ENCODE measurements at regions of chr10 and their contacts with region 1.

Region 1: DNA sequence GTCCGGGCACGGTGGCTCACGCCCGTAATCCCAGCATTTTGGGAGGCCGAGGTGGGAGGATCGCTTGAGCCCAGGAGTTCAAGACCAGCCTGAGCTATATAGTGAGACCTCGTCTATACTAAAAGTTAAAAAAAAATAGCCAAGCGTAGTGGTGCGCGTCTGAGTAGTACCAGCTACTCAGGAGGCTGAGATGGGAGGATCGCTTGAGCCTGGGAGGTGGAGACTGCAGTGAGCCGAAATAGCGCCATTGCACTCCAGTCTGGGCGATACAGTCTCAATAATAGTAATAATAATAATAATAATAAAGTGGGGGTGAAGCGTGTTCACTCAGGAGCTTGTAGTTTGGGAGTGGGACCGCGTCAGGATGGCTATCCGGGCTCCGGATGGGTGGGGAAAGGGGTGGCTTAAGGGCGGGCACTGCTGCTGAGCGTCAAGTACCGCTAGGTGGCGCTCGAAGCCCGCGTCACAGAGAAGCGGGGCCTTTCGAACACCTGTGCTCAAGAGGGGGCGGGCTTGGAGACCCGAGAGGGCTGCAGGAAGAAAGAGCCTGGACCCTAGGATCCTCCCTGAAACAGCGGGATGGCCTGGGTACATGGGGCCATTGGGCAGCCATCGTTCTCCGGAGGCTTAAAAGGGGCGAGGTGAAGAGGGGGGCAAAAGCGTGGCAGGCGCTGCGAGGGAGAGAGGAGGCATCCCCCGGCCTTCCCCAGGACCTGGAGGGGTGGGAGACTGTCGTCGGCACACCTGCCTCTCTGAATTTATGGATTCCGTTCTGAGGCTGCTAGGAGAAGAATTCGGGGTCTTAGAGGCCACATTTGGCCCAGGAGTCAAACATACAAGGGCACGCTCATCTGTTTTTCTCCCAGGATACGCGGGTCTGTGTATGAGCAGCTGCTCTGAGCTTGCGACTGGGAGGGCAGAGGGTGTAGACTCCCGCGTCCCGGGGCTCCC is 14.5 kb downstream of the LBX1 start:
- DNase-seq: no peak
- H3K4me3 ChIP-seq: no peak overlapping the region
- CTCF ChIP-seq: peak; percentile 82

Region 2: DNA sequence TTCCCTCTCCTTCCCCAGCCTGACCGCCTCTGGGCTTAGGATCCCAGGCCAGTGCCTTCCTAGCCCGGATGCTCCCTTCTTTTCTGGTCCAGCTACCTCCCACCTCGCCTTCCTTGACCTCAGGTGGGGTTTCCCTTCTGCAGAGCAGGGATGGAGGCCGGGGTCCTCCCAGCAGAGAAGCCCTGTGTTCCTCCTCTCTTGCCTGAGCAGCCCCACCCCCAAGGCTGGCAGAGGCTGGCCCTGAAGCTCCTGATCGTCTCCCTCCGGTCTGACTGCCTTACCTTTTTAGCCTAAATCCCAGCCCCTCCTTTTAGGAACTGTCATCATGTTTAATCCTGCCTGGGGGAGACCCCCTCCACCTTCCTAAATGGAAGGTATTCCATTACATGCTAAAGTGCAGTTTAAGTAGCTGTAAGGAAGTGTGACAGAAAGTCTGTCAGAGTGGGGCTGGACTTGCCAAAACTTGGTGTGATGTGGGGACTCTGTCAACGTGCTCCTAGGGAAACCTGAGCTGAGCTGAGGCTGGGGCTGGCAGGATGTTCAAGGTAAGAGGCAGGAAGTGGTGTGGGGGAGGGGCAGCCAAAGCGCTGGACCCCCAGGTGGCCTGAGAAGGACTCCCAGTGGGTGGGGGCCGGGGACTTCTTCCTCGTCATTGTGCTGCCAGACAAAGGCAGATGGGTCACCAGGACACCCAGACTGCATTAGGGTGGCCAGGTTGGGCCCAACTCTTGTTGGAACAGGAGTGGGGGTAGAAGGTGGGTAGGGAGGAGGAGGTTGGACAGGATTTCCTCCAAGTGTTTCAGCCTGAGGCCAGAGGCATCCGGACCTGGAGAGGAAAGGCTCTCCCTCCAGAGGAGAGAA is 24.9 kb before region 1 on chr10:
- CTCF ChIA-PET with region 1: interaction called, 19 read pairs
- POLR2A ChIA-PET with region 1: no interaction called
- DNase-seq: no peak
- H3K4me3 ChIP-seq: no peak overlapping the region
- CTCF ChIP-seq: no peak

Region 3: GRCh38 chr10:101441541-101442455 is 227.1 kb after region 1 on chr10:
- CTCF ChIA-PET with region 1: interaction called, 42 read pairs
- POLR2A ChIA-PET with region 1: no interaction called
- DNase-seq: peak; percentile 19
- H3K4me3 ChIP-seq: no peak overlapping the region
- CTCF ChIP-seq: peak; percentile 64

Region 4: DNA sequence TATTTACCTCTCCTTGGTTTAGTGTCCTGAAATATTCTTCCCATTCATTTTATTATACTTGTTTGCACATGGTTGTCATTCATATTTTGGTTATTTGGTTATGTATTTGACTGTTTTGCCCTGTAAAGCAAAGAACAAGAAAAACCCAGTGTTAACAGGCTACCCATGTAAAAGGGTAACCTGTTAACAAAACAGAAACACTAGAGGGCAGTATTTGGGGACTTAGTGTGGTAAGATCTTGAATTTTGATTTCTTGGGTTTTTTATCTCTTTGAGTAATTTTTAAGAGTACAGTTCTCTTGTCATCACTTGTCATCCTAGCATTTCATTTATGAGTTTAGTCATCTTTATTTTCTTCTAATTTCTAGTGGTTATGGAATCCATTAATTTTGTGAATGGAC is 322.1 kb after region 1 on chr10:
- CTCF ChIA-PET with region 1: interaction called, 11 read pairs
- POLR2A ChIA-PET with region 1: no interaction called
- DNase-seq: no peak
- H3K4me3 ChIP-seq: no peak overlapping the region
- CTCF ChIP-seq: no peak

Region 5: DNA sequence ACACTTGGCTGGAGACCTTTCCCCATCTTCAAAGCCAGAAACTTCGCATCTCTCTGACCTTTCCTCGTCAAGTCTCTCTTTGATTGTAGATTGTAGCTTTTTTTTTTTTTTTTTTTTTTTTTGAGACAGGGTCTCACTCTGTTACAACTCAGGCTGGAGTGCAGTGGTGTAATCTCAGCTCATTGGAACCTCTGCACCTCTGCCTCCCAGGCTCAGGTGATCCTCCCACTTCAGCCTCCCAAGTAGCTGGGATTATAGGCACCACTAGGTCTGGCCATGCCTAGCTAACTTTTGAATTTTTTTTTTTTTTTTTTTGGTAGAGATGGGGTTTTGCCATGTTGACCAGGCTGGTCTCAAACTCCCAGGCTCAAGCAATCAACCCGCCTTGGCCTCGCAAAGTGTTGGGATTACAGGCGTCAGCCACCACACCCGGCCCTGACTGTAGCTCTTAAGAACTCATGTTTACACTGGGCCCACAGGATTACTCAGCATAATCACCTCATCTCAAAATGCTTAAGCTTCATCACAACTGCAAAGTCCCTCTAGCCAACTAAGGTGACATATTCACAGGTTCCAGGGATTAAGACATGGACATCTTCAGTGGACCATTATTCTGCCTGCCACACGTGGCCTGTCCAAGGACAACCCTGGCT is 361.6 kb after region 1 on chr10:
- CTCF ChIA-PET with region 1: interaction called, 281 read pairs
- POLR2A ChIA-PET with region 1: no interaction called
- DNase-seq: no peak
- H3K4me3 ChIP-seq: no peak overlapping the region
- CTCF ChIP-seq: no peak

Region 6: DNA sequence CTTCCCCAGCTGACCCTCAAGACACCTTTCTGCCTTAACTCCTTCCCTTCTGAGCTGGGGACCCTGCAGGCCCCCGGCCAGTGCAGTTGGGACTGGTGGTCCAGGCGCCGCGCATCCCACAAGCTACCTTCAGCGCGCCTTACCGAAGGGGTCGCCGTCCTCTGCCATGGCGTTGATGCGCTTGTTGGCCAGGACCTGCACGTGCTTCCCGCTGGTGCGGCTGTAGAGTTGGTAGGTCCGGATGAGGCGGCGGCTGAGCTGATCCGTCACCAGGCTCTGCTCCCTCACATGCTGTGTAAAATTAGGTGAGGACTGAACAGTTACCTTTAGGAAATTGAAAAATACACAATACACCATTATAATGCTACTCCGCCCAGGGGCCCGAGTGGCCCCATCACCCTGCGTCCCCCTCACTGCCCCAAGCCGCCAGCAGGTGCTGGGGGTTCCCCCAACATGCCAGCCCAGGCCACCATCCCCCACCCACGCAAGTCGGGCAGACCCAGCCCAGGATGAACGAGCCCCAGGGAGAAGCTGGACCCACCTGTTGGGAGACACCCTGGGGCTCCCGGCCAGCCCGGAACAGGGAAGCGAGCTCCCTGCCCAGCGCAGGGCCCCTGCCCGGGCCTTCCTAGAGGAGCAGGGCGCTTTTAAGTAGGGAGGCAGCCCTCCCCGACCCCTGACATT is 560.0 kb after region 1 on chr10:
- CTCF ChIA-PET with region 1: interaction called, 182 read pairs
- POLR2A ChIA-PET with region 1: no interaction called
- DNase-seq: no peak
- H3K4me3 ChIP-seq: no peak overlapping the region
- CTCF ChIP-seq: no peak